Naive thymus-derived CD4-positive, alpha-beta T cell (primary cell): ENCODE measurements at regions of chr9 and their contacts with region 1.

Region 1: GRCh38 chr9:91101611-91102168 is 260.0 kb downstream of the AUH start:
- DNase-seq: peak; percentile 31 to 91 (median 87)
- ATAC-seq: peak; percentile 90
- H3K4me3 ChIP-seq: no peak overlapping the region
- H3K4me3 Mint-ChIP-seq: peak overlapping the region in 9 of 10 donors; percentile 44 to 82 (median 66)
- H3K27ac ChIP-seq: no peak overlapping the region
- H3K27ac Mint-ChIP-seq: peak overlapping the region in 7 of 9 donors; percentile 43 to 85 (median 78)
- H3K4me1 ChIP-seq: peaks cover 32 to 34% of the 10 kb centered on the region in 2 donors
- H3K4me1 Mint-ChIP-seq: peaks cover 27 to 61% (median 36%) of the 10 kb centered on the region in 7 donors
- H3K27me3 ChIP-seq: no peaks in the 10 kb centered on the region
- H3K27me3 Mint-ChIP-seq: peaks cover 0 to 25% (median 2%) of the 10 kb centered on the region in 5 donors

Region 2: GRCh38 chr9:90979138-90979551 is 122.5 kb before region 1 on chr9:
- CTCF ChIA-PET with region 1: no interaction called
- POLR2A ChIA-PET with region 1: no interaction called
- intact Hi-C with region 1: no loop called
- DNase-seq: no peak
- ATAC-seq: no peak
- H3K4me3 ChIP-seq: no peak overlapping the region
- H3K4me3 Mint-ChIP-seq: no peak overlapping the region
- H3K27ac ChIP-seq: no peak overlapping the region
- H3K27ac Mint-ChIP-seq: peak overlapping the region in 1 of 9 donors; percentile 24
- H3K4me1 ChIP-seq: no peaks in the 10 kb centered on the region
- H3K4me1 Mint-ChIP-seq: peaks cover 0 to 7% (median 0%) of the 10 kb centered on the region in 7 donors
- H3K27me3 ChIP-seq: no peaks in the 10 kb centered on the region
- H3K27me3 Mint-ChIP-seq: peaks cover 7 to 20% (median 11%) of the 10 kb centered on the region in 5 donors

Region 3: GRCh38 chr9:91047993-91048607 is 53.6 kb before region 1 on chr9:
- CTCF ChIA-PET with region 1: no interaction called
- POLR2A ChIA-PET with region 1: no interaction called
- intact Hi-C with region 1: loop called in 1 of 2 experiments (anchors 2 kb)
- DNase-seq: peak in 1 of 9 donors; percentile 39
- ATAC-seq: peak; percentile 14
- H3K4me3 ChIP-seq: no peak overlapping the region
- H3K4me3 Mint-ChIP-seq: peak overlapping the region; percentile 55 to 78 (median 66)
- H3K27ac ChIP-seq: no peak overlapping the region
- H3K27ac Mint-ChIP-seq: peak overlapping the region in 6 of 9 donors; percentile 28 to 88 (median 41)
- H3K4me1 ChIP-seq: peaks cover 5 to 7% of the 10 kb centered on the region in 2 donors
- H3K4me1 Mint-ChIP-seq: peaks cover 9 to 55% (median 19%) of the 10 kb centered on the region in 7 donors
- H3K27me3 ChIP-seq: peaks cover 0 to 5% of the 10 kb centered on the region in 2 donors
- H3K27me3 Mint-ChIP-seq: peaks cover 11 to 34% (median 23%) of the 10 kb centered on the region in 5 donors

Region 4: GRCh38 chr9:91131433-91131839 is 29.7 kb after region 1 on chr9:
- CTCF ChIA-PET with region 1: no interaction called
- POLR2A ChIA-PET with region 1: no interaction called
- intact Hi-C with region 1: loop called in 1 of 2 experiments (anchors 1 kb)
- DNase-seq: peak in 1 of 9 donors; percentile 72
- ATAC-seq: peak; percentile 85
- H3K4me3 ChIP-seq: no peak overlapping the region
- H3K4me3 Mint-ChIP-seq: peak overlapping the region in 1 of 10 donors; percentile 67
- H3K27ac ChIP-seq: no peak overlapping the region
- H3K27ac Mint-ChIP-seq: peak overlapping the region in 2 of 9 donors; percentile 31 to 95
- H3K4me1 ChIP-seq: peaks cover 0 to 6% of the 10 kb centered on the region in 2 donors
- H3K4me1 Mint-ChIP-seq: peaks cover 0 to 51% (median 4%) of the 10 kb centered on the region in 7 donors
- H3K27me3 ChIP-seq: no peaks in the 10 kb centered on the region
- H3K27me3 Mint-ChIP-seq: no peaks in the 10 kb centered on the region

Region 5: DNA sequence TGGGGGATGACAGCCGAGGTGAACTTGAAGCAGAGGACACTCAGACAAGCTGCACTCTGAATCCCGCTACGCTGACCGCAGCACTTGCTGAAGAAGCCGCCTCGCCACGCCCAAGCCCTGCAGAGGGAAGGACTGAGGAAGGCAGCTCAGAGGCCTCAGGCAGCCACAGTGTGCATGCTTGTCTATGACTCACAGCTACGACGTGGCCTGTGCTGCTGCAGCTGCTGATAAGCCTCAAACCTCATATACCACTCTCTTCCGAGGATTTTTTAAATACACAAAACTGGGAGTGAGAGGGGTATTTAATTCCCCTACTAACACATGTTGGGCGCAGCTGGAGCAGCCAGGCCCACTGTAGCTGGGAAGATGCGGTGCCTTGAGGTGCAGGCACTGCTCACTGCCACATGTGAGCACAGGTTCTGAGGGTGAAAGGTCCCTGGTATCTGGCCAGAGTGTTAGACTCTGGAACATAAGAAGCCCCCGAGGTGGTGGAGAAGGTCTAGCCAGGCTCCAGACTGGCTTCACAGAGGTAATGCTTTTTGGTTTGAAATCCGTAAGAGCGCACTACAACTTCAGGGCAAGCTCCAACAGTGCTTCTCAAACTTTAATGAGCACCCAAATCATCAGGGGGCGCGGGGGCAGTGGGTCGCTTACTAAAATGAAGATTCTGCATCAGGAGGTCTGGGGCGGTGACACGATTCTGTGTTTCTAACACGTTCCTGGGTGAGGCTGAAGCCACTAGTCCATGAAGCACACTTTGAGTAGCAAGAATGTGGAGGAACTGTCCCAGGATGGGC is 63.2 kb after region 1 on chr9:
- CTCF ChIA-PET with region 1: no interaction called
- POLR2A ChIA-PET with region 1: no interaction called
- intact Hi-C with region 1: loop called in 1 of 2 experiments (anchors 1 kb)
- DNase-seq: peak in 1 of 9 donors; percentile 78
- ATAC-seq: peak; percentile 90
- H3K4me3 ChIP-seq: no peak overlapping the region
- H3K4me3 Mint-ChIP-seq: peak overlapping the region in 2 of 10 donors; percentile 6 to 89
- H3K27ac ChIP-seq: no peak overlapping the region
- H3K27ac Mint-ChIP-seq: peak overlapping the region in 2 of 9 donors; percentile 72 to 97
- H3K4me1 ChIP-seq: peaks cover 15 to 38% of the 10 kb centered on the region in 2 donors
- H3K4me1 Mint-ChIP-seq: peaks cover 13 to 63% (median 35%) of the 10 kb centered on the region in 7 donors
- H3K27me3 ChIP-seq: no peaks in the 10 kb centered on the region
- H3K27me3 Mint-ChIP-seq: no peaks in the 10 kb centered on the region

Region 6: DNA sequence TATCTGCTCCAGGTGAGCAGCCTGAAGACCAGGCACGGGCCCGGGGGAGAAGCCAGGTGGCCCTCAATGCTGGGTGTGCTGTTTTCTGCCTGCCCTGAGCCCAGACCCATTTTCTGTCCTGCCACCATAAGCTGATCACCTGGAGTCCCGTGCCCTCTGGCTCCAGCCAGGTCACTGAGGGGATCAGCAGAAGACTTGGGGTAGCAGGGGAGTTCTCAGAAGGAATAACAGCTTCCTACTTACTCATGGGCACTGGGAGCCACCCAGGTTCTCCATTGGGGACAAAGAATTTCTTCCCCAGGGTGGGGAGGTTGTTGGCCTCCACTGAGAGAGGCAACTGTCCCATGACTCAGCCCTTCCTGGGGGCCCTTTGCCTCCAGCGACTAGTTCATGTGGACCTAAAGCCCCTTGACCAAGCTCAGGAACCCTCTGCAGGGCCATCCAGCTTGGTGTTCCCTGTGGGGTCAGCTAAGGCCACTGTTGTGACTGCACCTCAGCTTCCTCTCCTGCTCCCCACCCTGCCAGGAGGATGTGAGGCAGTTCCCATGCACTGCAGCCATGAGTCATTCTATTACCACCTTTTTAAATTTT is 84.9 kb after region 1 on chr9:
- CTCF ChIA-PET with region 1: no interaction called
- POLR2A ChIA-PET with region 1: no interaction called
- intact Hi-C with region 1: no loop called
- DNase-seq: no peak
- ATAC-seq: peak; percentile 73
- H3K4me3 ChIP-seq: no peak overlapping the region
- H3K4me3 Mint-ChIP-seq: peak overlapping the region in 1 of 10 donors; percentile 3
- H3K27ac ChIP-seq: no peak overlapping the region
- H3K27ac Mint-ChIP-seq: peak overlapping the region in 1 of 9 donors; percentile 63
- H3K4me1 ChIP-seq: peaks cover 0 to 4% of the 10 kb centered on the region in 2 donors
- H3K4me1 Mint-ChIP-seq: peaks cover 0 to 44% (median 0%) of the 10 kb centered on the region in 7 donors
- H3K27me3 ChIP-seq: no peaks in the 10 kb centered on the region
- H3K27me3 Mint-ChIP-seq: no peaks in the 10 kb centered on the region

Region 7: GRCh38 chr9:91253488-91253887 is 151.8 kb after region 1 on chr9:
- CTCF ChIA-PET with region 1: no interaction called
- POLR2A ChIA-PET with region 1: no interaction called
- intact Hi-C with region 1: loop called in 1 of 2 experiments (anchors 1 kb)
- DNase-seq: peak in 6 of 9 donors; percentile 5 to 32 (median 12)
- ATAC-seq: peak; percentile 64
- H3K4me3 ChIP-seq: no peak overlapping the region
- H3K4me3 Mint-ChIP-seq: no peak overlapping the region
- H3K27ac ChIP-seq: no peak overlapping the region
- H3K27ac Mint-ChIP-seq: peak overlapping the region in 1 of 9 donors; percentile 23
- H3K4me1 ChIP-seq: peaks cover 0 to 8% of the 10 kb centered on the region in 2 donors
- H3K4me1 Mint-ChIP-seq: peaks cover 0 to 45% (median 6%) of the 10 kb centered on the region in 7 donors
- H3K27me3 ChIP-seq: no peaks in the 10 kb centered on the region
- H3K27me3 Mint-ChIP-seq: no peaks in the 10 kb centered on the region